ENCODE measurements at regions of chr20 and their contacts with region 1.

Region 1: GRCh38 chr20:17281478-17281877 is 54.6 kb downstream of the PCSK2 start:
- DNase-seq: peak in 1 of 2 experiments; percentile 84
- H3K4me3 ChIP-seq: no peak overlapping the region
- H3K27ac ChIP-seq: no peak overlapping the region
- H3K4me1 ChIP-seq: peaks cover 0 to under 1% (median 0%) of the 10 kb centered on the region in 4 experiments; a peak in 2 of 7 replicates
- H3K27me3 ChIP-seq: peaks cover 0 to 1% (median 0%) of the 10 kb centered on the region in 4 experiments; a peak in 1 of 7 replicates
- CTCF ChIP-seq: peak; percentile 56 to 83 (median 72)
- EP300 ChIP-seq: no peak
- POLR2A ChIP-seq: no peak
- RAD21 ChIP-seq: peak; percentile 73 to 76

Region 2: DNA sequence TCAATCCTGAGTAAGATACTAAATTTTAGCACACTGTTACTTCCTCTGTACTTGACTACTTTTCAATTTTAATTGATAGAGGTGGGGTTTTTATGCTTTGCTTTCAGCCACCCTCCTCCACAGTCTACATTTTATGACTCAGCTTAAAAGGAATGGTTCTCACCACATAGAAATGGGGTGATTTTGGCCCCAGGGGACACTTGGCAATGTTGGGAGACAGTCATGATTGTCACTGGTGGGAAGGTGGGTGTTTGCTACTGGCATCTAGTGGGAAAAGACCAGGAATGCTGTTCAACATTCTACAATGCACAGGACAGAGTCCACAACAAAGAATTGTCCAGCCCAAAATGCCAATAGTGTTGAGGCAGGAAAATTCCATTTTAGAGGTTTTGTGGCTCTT is 16.7 kb after region 1 on chr20:
- CTCF ChIA-PET with region 1: interaction called, 35 read pairs
- POLR2A ChIA-PET with region 1: no interaction called
- DNase-seq: no peak
- H3K4me3 ChIP-seq: no peak overlapping the region
- H3K27ac ChIP-seq: no peak overlapping the region
- H3K4me1 ChIP-seq: no peaks in the 10 kb centered on the region
- H3K27me3 ChIP-seq: no peaks in the 10 kb centered on the region
- CTCF ChIP-seq: no peak
- EP300 ChIP-seq: no peak
- POLR2A ChIP-seq: no peak
- RAD21 ChIP-seq: no peak